H1 (cell line): ENCODE measurements at regions of chr16 and their contacts with region 1.

Region 1: DNA sequence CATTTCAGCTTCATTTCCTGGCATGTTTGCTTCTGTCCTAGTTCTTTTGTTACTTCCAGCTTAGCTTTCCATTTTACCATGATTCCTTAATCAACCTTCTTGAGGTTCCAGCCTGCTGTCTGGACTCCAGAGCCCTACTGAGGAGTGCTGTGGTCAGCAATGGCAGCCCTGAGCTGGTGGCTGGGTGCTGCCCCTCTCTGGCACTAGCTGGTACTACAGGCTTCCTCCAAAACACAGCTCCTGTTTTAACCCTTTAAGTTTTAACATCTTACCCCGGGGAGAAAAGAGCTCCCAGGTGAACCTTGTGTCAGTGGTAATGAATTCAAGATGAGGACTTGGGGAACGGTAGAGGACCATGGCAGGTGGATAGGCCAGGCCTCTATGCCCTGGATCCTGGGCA is 395.5 kb downstream of the TMEM114 start:
- DNase-seq: peak; percentile 33 to 81
- H3K4me3 ChIP-seq: no peak overlapping the region
- H3K27ac ChIP-seq: no peak overlapping the region
- H3K4me1 ChIP-seq: no peaks in the 10 kb centered on the region
- H3K27me3 ChIP-seq: no peaks in the 10 kb centered on the region
- CTCF ChIP-seq: peak; percentile 71 to 84 (median 71)
- EP300 ChIP-seq: no peak
- POLR2A ChIP-seq: no peak
- RAD21 ChIP-seq: peak; percentile 80 to 87

Region 2: GRCh38 chr16:8179615-8180014 is 15.2 kb before region 1 on chr16:
- CTCF ChIA-PET with region 1: interaction called, 11 read pairs
- POLR2A ChIA-PET with region 1: no interaction called
- DNase-seq: no peak
- H3K4me3 ChIP-seq: no peak overlapping the region
- H3K27ac ChIP-seq: no peak overlapping the region
- H3K4me1 ChIP-seq: 0 out of 7 replicates have a peak, but pooled peaks cover 0 to 2% (median 0%) of the 10 kb centered on the region in 4 experiments
- H3K27me3 ChIP-seq: no peaks in the 10 kb centered on the region
- CTCF ChIP-seq: no peak
- EP300 ChIP-seq: no peak
- POLR2A ChIP-seq: no peak
- RAD21 ChIP-seq: no peak

Region 3: DNA sequence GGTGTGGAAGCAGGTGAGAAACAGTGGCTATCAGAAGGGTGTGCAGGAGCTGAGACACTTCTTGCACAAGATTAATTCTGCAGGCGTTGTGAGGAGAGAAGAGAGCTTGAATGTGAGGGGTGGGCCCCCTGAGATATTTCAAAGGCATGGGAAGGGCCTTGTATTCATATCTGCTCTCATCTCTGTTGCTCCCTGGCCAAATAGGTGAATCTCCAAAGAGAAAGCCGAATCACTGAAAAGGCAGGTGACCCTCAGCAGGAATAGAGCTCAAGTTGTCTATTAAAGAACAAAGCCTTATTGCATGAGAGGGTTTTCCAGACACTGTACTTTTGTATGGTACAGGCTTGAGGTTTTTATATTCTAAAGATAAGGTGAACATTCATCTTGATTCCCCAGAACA is 22.4 kb after region 1 on chr16:
- CTCF ChIA-PET with region 1: interaction called, 12 read pairs
- POLR2A ChIA-PET with region 1: no interaction called
- DNase-seq: no peak
- H3K4me3 ChIP-seq: no peak overlapping the region
- H3K27ac ChIP-seq: no peak overlapping the region
- H3K4me1 ChIP-seq: no peaks in the 10 kb centered on the region
- H3K27me3 ChIP-seq: no peaks in the 10 kb centered on the region
- CTCF ChIP-seq: no peak
- EP300 ChIP-seq: no peak
- POLR2A ChIP-seq: no peak
- RAD21 ChIP-seq: no peak